ENCODE measurements at regions of chr5 and their contacts with region 1.

Region 1: DNA sequence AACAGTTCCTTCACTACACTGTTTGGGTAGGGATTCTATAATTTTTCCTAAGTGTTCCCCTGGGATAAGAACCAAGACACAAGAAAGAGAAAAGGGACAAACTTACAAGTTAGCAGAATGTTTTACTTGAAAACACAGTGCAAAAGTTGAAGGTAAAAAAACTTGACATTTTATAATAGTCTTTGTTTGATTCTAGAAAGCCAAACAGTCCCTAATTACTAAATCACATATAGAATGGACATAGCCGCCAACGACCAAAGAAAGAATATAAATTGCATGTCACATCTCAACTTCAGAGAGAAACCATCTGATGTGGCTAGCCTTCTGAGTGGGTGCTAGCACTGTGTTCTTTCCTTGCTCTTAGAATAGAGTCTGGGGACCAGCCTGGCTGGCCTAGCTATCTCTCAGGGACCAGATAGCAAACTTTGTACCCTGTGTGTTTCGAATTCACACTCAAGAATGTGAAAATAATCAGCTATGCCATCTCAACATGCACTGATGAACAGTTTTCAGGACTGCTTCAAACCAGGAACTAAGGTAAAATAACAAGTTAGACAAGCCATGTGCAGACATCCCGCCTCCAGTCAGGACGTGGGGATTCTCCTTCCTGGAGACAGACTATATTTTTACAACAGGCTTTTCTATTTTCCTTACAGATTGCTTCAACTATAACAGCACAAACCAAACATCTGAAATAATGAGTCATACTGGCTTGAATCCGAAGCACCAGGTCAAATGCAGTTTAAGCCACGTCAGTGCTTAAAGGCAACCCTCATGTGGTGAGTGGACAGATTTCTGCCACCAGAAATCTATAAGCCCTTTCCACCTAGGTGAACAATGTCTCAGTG is 53.7 kb downstream of the LHFPL2 start:
- DNase-seq: peak; percentile 96
- H3K4me3 ChIP-seq: no peak overlapping the region
- H3K27ac ChIP-seq: peak overlapping the region; percentile 90
- H3K4me1 ChIP-seq: peaks cover 63% of the 10 kb centered on the region
- H3K27me3 ChIP-seq: no peaks in the 10 kb centered on the region
- CTCF ChIP-seq: peak in 1 of 2 donors; percentile 3

Region 2: DNA sequence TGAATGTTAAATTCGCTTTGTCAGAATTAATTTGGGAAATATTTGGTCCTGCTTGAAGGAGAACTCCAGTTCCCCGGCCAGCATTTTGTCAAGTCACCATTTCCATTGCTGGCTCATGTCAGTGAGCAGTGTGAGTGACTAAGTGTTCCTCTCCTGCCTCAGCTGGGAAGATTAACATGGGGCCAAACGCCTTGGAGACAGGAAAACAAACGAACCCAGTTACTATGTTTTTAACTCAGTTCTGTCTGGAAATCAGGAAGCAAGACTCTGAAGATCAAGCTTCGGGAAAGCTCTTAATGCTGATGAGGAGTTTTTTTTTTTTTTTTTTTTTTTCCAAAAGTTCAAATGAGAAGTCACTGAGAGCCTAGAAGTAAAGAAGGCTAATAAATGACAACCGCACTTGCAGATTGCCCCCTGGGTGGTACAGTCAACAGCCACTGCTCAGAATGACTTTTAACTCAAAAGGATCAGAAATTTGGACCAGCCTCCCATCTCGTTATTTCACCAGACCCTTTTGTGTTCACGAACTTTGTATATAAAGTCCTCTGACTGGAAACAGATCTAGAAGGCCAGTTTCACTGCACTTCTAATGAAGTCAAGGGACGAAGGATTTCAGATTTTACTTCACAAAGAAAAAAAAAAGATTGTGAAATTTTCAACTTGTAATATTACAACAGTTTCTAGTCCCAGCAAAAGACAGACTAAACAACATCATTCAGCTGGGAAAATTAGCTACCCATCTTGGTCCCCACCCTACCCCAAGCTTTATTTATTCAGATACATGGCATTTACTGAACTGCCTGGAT is 67.6 kb before region 1 on chr5:
- CTCF ChIA-PET with region 1: no interaction called
- dilution Hi-C with region 1: loop called (anchors 5 kb)
- in situ Hi-C with region 1: no loop called
- intact Hi-C with region 1: no loop called
- DNase-seq: peak; percentile 89
- H3K4me3 ChIP-seq: no peak overlapping the region
- H3K27ac ChIP-seq: peak overlapping the region; percentile 98
- H3K4me1 ChIP-seq: peaks cover 50% of the 10 kb centered on the region
- H3K27me3 ChIP-seq: no peaks in the 10 kb centered on the region
- CTCF ChIP-seq: no peak

Region 3: DNA sequence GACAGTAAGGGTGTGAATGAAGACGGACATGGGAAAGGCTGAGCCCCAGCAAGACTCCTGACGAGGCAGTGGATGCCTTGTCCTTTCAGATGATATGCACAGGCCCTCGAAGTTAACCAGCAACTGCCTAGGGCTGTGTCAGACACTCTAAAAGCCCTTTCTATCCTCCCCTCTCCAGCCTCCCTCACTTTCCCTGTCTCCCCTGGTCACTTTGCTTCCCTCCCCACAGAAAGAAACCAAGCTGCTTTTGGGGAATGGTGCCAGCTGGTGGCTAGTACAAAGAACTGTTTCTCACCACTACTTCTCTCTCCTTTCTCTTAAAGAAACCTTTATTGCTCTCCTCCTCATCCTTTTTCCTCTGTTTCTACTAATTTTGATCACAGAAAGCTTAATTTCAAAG is 32.3 kb after region 1 on chr5:
- CTCF ChIA-PET with region 1: no interaction called
- dilution Hi-C with region 1: loop called (anchors 5 kb)
- in situ Hi-C with region 1: no loop called
- intact Hi-C with region 1: no loop called
- DNase-seq: no peak
- H3K4me3 ChIP-seq: no peak overlapping the region
- H3K27ac ChIP-seq: no peak overlapping the region
- H3K4me1 ChIP-seq: peaks cover 6% of the 10 kb centered on the region
- H3K27me3 ChIP-seq: no peaks in the 10 kb centered on the region
- CTCF ChIP-seq: peak; percentile 29 to 39